Left ventricle myocardium inferior (tissue), 1 donor: ENCODE measurements at regions of chr2 and their contacts with region 1.

Region 1: DNA sequence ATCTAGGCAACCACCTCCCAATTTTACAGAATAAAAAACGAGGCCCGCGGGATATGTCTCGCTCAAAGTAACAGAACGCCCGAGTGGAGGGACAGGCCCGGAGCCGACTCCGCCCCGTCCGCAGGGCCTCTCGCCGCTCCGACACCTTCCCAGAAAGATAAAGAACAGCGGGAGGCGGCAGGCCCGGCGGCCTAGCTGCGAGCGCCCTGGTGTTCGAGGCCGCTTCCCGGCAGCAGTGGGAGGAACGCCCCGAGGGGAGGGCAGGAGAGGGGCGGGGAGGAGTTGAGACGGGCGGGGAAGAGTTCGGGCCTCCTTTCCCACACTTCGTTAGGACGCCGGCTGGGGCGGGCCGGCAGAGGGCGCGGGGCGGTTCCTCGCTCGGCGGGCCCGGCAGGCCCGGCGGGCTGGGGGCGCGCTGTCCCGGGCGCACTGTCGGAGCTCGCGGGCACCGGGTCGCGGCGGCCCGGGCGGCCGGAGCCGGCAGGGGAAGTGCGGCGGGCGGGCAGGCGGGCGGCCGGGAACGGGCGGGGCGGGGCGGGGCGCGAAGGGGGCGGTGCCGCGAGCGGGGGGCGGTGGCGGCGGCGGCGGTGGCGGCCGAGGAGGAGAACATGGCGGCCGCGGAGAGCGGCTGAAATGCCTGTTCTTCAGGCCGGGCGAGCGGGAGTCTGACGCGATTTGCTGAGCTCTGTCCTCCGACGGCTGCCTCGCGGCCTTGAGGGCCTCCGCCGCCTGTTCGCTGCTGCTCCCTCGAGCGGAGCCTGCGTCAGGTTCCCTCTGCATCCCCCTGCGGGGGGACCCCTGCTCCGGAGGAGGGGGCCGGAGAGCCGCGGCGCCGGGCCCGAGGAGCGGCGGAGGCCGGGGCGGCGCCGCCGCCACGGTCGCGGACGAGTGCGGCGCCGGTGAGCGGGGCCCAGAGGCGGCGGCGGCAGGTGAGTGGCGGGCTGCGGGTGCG is at the start of gene NCOA1:
- DNase-seq: peak; percentile 91
- H3K4me3 ChIP-seq: peak within 1 kb of the TSS; percentile 91
- H3K27ac ChIP-seq: peak within 1 kb of the TSS; percentile 89
- H3K4me1 ChIP-seq: peaks cover 57% of the 10 kb centered on the region
- H3K27me3 ChIP-seq: no peaks in the 10 kb centered on the region
- CTCF ChIP-seq: peak; percentile 47
- total RNA-seq, gene NCOA1: 26.9 TPM

Region 2: GRCh38 chr2:24435391-24436316 is 55.3 kb before region 1 on chr2:
- intact Hi-C with region 1: loop called (anchors 10 kb)
- DNase-seq: peak; percentile 78
- H3K4me3 ChIP-seq: peak overlapping the region; percentile 20
- H3K27ac ChIP-seq: peak overlapping the region; percentile 83
- H3K4me1 ChIP-seq: peaks cover 50% of the 10 kb centered on the region
- H3K27me3 ChIP-seq: no peaks in the 10 kb centered on the region
- CTCF ChIP-seq: no peak

Region 3: DNA sequence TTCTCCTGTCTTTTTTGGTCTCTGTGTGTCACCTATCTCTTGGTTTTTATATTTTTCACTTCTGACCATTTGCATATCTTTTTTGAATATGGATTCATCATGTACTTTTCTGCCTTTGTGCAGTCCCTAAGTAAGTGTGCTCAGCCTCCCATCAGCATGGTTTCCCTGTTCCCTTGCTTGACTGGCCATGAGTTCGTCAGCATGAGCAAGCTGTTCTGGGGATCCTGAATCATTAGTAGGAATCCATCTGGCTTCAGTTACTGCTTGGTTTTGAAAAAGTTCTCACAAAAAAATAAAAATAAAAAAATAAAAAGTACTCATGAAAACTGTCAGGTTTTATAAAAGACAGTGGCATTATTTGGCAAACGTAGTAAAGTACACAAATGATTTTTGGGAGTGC is 144.2 kb after region 1 on chr2:
- intact Hi-C with region 1: no loop called
- DNase-seq: no peak
- H3K4me3 ChIP-seq: no peak overlapping the region
- H3K27ac ChIP-seq: no peak overlapping the region
- H3K4me1 ChIP-seq: peaks cover 10% of the 10 kb centered on the region
- H3K27me3 ChIP-seq: no peaks in the 10 kb centered on the region
- CTCF ChIP-seq: no peak

Region 4: DNA sequence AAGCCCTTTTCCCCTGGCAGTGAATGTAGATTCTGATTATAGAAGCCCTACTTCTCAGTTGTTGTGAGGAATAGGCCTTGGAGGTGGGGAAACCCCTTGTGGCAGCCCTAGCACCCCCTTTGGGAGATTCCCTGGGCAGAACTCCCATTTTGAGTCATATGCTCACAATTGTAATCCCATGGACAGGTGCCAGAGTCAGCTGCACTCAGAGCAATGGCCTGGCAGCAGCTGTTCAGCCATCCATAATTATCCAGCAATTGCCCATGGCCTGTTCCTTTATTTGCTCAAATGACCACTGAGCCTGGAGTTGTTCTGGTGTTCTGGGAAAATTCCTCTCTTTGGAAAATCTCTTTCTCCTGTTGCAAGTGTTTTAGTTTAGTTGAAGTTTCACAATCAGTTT is 230.5 kb after region 1 on chr2:
- intact Hi-C with region 1: loop called (anchors 10 kb)
- DNase-seq: peak; percentile 67
- H3K4me3 ChIP-seq: no peak overlapping the region
- H3K27ac ChIP-seq: peak overlapping the region; percentile 60
- H3K4me1 ChIP-seq: peaks cover 38% of the 10 kb centered on the region
- H3K27me3 ChIP-seq: no peaks in the 10 kb centered on the region
- CTCF ChIP-seq: no peak